PC-9 (cell line): ENCODE measurements at regions of chr18 and their contacts with region 1.

Region 1: DNA sequence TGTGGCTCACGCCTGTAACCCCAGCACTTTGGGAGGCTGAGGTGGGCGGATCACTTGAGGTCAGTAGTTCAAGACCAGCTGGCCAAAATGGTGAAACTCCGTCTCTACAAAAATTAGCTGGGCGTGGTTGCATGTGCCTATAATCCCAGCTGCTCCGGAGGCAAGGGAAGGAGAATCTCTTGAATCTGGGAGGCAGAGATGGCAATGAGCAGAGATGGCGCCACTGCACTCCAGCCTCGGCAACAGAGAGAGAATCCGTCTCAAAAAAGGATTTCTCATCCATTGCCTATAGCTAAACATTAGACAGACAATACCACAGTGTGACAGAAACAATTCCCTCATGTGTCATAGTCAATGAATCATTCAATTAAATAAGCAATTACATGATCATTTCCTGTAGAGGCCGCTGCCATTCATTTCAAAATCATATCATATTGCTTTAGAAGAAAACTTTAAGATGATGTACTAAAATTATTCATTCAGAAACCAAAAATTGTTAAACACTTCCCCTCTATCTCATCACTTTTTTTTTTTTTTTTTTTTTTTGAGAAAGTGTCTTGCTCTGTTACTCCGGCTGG is 69.5 kb upstream of the TGIF1 start:
- DNase-seq: peak in 1 of 2 experiments; percentile 81
- H3K4me3 ChIP-seq: peak overlapping the region; percentile 35; the same call in 1 of the 2 replicates
- H3K27ac ChIP-seq: peak overlapping the region; percentile 99
- H3K4me1 ChIP-seq: peaks cover 64% of the 10 kb centered on the region
- H3K27me3 ChIP-seq: no peaks in the 10 kb centered on the region
- CTCF ChIP-seq: peak; percentile 44; the same call in 1 of the 2 replicates

Region 2: DNA sequence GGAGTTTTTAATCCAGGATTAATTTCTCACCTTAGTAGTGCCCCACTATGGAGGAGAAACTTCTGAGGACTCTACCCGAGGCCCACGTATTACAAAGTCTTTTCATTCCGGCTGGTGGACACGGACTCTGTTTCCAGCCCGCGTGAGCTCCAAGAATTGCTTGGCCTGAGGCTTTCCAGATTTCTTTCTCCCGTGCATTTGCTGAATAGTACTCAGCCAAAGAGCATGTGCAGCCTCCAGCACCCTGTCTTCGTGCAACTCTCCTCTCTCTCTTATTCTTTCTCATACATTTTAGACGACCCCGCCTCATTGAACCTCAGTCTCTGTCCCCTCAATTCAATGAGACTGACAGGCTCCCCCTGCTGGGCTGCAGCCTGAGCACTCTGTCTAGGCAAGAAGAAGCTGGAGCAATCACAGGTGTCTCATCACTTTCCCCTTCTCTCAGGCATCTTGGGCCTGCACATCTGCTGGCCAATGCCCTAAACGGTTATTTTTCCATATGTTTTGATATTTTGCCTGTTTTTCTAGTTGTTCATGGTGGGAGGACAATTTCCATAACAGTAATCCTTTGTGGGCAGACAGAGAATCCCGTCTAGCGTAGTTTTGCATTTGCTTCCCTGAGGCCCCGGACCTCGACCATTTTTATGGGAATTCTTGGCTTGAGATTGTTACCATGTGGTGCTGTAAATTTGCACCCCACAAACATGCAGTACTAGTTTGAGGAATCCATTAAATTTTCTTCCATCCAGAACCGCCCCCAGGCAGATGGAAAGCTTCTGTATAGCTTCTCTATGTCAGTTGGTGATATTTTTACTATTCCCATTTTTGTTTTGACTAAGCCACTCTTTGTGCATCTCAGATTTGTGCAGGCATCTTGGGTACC is 317.4 kb before region 1 on chr18:
- CTCF ChIA-PET with region 1: no interaction called
- POLR2A ChIA-PET with region 1: no interaction called
- intact Hi-C with region 1: no loop called
- DNase-seq: peak in 1 of 2 experiments; percentile 31
- H3K4me3 ChIP-seq: no peak overlapping the region
- H3K27ac ChIP-seq: no peak overlapping the region
- H3K4me1 ChIP-seq: peaks cover 17% of the 10 kb centered on the region
- H3K27me3 ChIP-seq: no peaks in the 10 kb centered on the region
- CTCF ChIP-seq: peak; percentile 68

Region 3: GRCh38 chr18:3209859-3210569 is 170.5 kb before region 1 on chr18:
- CTCF ChIA-PET with region 1: no interaction called
- POLR2A ChIA-PET with region 1: no interaction called
- intact Hi-C with region 1: no loop called
- DNase-seq: peak in 1 of 2 experiments; percentile 58
- H3K4me3 ChIP-seq: no peak overlapping the region
- H3K27ac ChIP-seq: no peak overlapping the region
- H3K4me1 ChIP-seq: peaks cover 35% of the 10 kb centered on the region
- H3K27me3 ChIP-seq: no peaks in the 10 kb centered on the region
- CTCF ChIP-seq: no peak

Region 4: DNA sequence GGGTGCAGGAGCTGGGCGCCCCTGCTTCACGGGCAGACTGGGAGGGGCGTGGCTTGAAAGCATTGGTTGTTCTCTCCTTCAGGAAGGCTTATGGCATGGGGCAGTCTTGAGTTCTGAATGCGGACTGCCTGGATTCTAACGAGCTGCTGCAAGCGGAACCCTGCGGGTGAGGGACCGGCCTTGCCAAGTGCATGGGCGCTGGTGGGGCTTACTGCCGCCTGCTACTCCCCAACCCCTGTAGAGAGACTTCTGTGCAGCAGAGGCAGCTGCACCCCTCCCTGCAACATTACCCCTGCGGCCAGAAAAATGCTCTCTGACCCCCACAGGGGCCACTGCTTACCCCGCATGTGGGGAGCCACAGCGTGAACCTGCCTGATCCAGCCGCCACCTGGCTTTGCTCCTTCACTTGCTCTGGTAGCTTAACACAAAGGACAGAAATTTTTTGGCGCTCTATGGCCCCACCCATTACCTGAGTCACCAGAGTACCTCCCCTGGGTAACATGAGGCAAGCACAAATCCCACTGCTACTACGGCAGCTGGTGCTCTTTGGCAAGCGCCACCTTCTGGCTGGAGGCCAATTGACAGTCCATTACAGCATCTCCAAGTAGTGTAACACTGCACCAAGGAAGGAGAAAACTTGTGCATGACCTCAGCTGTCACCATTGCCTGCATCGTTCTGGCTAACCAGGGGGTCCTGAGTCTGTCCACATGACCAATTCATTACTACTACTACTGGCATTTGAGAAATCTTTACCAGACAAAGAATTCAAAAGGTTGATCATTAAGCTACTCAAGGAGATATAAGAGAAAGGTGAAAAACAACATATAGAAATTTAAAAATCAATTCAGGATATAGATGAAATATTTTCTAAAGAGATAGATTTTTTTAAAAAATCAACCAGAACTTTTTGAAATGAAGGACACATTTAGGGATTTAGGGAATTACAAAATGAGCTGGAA is 83.2 kb before region 1 on chr18:
- CTCF ChIA-PET with region 1: no interaction called
- POLR2A ChIA-PET with region 1: interaction called, 10 read pairs
- intact Hi-C with region 1: loop called (anchors 2 kb)
- DNase-seq: peak; percentile 94 to 95
- H3K4me3 ChIP-seq: peak overlapping the region; percentile 77
- H3K27ac ChIP-seq: peak overlapping the region; percentile 68
- H3K4me1 ChIP-seq: 0 out of 2 replicates have a peak, but pooled peaks cover 8% of the 10 kb centered on the region
- H3K27me3 ChIP-seq: no peaks in the 10 kb centered on the region
- CTCF ChIP-seq: peak; percentile 72

Region 5: DNA sequence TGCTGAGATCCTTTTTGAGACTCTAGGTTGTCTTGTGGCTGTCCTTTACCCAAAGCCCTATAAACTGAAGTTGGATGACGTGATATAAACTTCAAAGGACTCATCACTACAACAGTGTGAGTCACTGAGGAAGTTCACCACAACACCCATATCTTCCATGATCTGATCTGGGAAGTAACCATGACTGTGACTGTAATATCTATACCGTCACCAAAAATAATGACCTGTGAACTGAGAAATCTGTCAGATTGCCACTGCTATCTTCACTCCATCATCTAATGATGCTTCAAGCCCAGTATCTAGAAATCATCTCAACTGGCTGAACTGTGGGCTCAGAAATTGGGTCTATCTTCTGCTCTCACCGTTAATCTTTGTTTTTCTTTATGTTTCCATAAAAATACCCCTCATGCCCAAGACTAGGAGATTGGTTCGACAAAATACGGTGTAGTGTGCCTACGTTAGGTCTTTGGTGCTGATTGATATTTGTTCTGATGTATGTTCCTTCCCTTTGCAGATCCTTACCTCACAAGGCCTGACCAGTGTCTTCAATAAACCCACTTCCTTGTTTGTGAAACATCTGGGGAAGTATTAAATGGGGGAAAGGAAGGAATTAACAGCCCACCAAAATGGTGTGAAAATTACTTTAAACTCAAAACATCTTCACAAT is 40.3 kb before region 1 on chr18:
- CTCF ChIA-PET with region 1: no interaction called
- POLR2A ChIA-PET with region 1: no interaction called
- intact Hi-C with region 1: no loop called
- DNase-seq: no peak
- H3K4me3 ChIP-seq: no peak overlapping the region
- H3K27ac ChIP-seq: no peak overlapping the region
- H3K4me1 ChIP-seq: no peaks in the 10 kb centered on the region
- H3K27me3 ChIP-seq: no peaks in the 10 kb centered on the region
- CTCF ChIP-seq: no peak

Region 6: DNA sequence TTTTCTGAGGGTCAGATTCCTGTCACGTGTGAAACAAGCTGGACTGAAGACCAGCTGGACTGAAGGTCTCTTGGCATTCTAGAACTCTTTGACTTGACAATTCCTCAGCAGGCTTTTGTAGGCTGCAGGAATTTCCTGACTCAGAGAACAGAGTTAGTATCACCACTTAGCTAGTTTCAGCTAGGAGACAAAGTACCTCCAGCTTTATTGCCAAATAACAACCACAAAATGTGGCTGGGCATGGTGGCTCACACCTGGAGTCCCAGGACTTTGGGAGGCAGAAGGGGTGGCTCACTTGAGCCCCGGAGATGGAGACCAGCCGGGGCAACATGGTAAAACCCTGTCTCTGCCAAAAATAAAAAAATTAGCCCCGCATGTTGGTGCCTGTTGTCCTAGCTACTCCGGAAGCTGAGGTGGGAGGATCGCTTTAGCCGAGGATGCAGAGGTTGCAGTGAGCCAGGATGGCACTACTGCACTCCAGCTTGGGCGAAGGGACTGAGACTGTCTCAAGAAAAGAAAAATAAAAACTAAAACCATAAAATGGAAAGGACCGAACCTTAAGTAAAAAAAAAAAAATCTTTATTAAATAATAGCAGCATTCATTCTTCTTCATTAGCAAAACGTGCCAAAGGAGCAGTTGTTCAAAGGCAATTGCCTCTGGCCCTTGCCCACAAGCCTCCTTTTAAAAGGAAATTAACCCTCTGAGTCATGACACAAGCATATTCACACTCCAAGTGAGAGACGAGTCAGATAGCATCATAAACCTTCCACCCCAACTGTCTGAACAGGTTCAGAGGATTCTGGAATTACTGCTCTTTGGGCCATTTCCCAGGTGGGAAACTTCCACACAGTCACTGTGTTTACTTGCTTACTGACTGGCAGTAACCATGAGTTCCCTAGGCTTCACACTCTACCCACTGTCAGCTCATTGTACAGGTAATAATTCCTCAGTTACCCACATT is 29.6 kb before region 1 on chr18:
- CTCF ChIA-PET with region 1: interaction called, 10 read pairs
- POLR2A ChIA-PET with region 1: interaction called, 4 read pairs
- intact Hi-C with region 1: no loop called
- DNase-seq: peak; percentile 43 to 89
- H3K4me3 ChIP-seq: no peak overlapping the region
- H3K27ac ChIP-seq: peak overlapping the region; percentile 70
- H3K4me1 ChIP-seq: peaks cover 20% of the 10 kb centered on the region
- H3K27me3 ChIP-seq: no peaks in the 10 kb centered on the region
- CTCF ChIP-seq: no peak

Region 7: DNA sequence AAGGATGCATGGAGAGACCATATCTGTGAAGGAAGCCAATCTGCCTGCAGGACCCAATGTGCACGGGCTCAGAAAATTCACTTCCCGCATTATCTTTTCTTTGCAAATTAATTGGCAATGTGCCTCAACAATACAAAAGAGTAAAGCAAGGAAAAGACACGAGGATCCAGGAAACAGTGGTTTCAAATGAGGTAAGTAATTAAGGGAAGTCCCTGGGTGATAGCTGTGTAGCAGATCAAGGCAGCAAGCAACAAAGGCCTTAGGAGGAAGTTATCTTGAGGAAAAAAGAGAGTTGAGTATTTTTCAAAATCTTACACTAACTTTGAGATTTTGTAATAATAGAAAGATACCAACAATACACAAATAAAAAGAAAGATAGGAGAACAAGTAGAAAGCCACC is 25.2 kb after region 1 on chr18:
- CTCF ChIA-PET with region 1: interaction called, 6 read pairs
- POLR2A ChIA-PET with region 1: interaction called, 42 read pairs
- intact Hi-C with region 1: no loop called
- DNase-seq: no peak
- H3K4me3 ChIP-seq: no peak overlapping the region
- H3K27ac ChIP-seq: no peak overlapping the region
- H3K4me1 ChIP-seq: peaks cover 27% of the 10 kb centered on the region
- H3K27me3 ChIP-seq: no peaks in the 10 kb centered on the region
- CTCF ChIP-seq: no peak

Region 8: GRCh38 chr18:3454365-3455089 is 74.1 kb after region 1 on chr18:
- CTCF ChIA-PET with region 1: no interaction called
- POLR2A ChIA-PET with region 1: interaction called, 12 read pairs
- intact Hi-C with region 1: no loop called
- DNase-seq: peak; percentile 41 to 52
- H3K4me3 ChIP-seq: peak overlapping the region; percentile 83
- H3K27ac ChIP-seq: peak overlapping the region; percentile 96
- H3K4me1 ChIP-seq: peaks cover 49% of the 10 kb centered on the region
- H3K27me3 ChIP-seq: no peaks in the 10 kb centered on the region; the same call in 1 of the 2 replicates
- CTCF ChIP-seq: peak; percentile 79

Region 9: DNA sequence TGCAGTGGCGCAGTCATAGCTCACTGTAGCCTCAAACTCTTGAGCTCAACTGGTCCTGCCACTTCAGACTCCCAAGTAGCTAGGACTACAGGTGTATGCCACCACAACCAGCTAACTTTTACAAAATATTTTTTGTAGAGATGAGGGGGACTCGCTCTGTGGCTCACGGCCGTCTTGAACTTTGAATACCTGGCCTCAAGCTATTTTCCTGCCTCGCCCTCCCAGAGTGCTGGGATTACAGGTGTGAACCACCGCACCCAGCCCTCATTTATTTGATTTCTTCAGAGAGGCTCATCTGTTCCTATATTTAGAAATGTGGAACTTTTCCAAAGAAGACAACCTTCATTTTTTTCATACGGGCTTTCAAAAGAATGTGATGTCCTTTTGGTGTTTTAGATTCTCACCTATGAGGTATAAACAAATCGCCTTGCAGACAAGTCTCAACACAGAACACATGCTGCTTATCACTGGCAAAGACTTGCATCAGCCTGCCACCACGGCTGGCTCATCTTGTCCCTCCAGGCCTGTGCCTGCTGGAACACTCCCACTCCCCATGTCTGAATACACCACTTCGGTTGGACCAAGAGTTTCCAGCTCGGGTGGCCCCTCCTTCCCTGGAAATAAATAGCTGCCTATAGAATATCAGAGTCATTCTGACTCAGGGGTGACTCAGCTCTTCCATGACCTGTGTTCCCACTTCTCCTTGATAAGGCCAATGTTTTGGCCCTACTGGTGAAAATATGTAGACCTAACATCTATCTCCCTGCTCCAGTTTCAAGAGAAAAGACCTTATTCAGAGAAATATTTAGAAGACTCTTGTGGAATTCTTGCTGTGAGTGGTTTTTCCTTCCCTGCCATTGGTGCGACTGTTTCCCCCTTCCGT is 272.1 kb after region 1 on chr18:
- CTCF ChIA-PET with region 1: no interaction called
- POLR2A ChIA-PET with region 1: interaction called, 10 read pairs
- intact Hi-C with region 1: loop called (anchors 1 kb)
- DNase-seq: peak; percentile 97 to 99
- H3K4me3 ChIP-seq: peak overlapping the region; percentile 63
- H3K27ac ChIP-seq: peak overlapping the region; percentile 99
- H3K4me1 ChIP-seq: peaks cover 80% of the 10 kb centered on the region
- H3K27me3 ChIP-seq: no peaks in the 10 kb centered on the region
- CTCF ChIP-seq: 0 out of 2 replicates have a peak, but pooled peaks have one; percentile 19

Region 10: DNA sequence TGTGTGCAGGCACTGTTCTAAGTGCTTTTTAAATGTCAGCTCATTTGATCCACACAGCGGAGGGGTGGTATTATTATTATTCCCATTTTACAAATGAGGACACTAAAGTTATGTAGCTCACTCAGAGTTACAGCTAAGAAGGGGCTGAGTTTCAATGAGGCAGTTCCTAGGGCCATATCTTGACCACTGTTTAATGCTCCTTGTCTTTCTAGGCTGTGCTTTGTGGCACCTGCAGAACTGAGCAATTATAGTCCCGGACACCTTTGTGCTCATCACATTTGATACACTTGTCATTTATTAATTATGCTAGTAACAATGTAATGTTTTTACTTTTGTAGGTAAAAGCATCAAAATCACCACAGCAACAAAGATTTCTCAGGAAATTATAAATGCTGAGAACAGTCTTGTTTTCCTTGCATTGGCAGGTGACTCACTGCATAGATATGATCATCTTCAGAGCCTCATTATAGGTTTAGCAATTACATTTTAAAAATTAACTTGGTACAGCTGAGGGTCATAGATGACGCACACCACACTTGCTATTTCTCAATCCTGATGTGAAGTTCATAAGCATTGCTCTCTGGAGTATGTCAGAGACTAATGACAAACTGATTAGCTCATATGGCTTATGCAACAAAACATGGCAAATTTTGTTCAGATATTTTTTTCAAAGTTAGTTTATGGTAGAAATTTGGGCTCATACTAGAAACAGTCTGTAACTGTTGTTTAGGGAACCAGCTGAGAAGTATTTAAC is 436.3 kb after region 1 on chr18:
- CTCF ChIA-PET with region 1: no interaction called
- POLR2A ChIA-PET with region 1: no interaction called
- intact Hi-C with region 1: no loop called
- DNase-seq: peak in 1 of 2 experiments; percentile 77
- H3K4me3 ChIP-seq: no peak overlapping the region
- H3K27ac ChIP-seq: peak overlapping the region; percentile 69
- H3K4me1 ChIP-seq: peaks cover 17% of the 10 kb centered on the region
- H3K27me3 ChIP-seq: no peaks in the 10 kb centered on the region
- CTCF ChIP-seq: no peak